AG04450 (cell line): ENCODE measurements at regions of chr2 and their contacts with region 1.

Region 1: GRCh38 chr2:74573747-74574562 is 19.4 kb downstream of the DOK1 start:
- DNase-seq: peak; percentile 68
- H3K4me3 ChIP-seq: peak overlapping the region; percentile 14; the same call in 1 of the 2 replicates
- H3K27ac ChIP-seq: peak overlapping the region; percentile 49
- H3K27me3 ChIP-seq: no peaks in the 10 kb centered on the region
- CTCF ChIP-seq: no peak

Region 2: DNA sequence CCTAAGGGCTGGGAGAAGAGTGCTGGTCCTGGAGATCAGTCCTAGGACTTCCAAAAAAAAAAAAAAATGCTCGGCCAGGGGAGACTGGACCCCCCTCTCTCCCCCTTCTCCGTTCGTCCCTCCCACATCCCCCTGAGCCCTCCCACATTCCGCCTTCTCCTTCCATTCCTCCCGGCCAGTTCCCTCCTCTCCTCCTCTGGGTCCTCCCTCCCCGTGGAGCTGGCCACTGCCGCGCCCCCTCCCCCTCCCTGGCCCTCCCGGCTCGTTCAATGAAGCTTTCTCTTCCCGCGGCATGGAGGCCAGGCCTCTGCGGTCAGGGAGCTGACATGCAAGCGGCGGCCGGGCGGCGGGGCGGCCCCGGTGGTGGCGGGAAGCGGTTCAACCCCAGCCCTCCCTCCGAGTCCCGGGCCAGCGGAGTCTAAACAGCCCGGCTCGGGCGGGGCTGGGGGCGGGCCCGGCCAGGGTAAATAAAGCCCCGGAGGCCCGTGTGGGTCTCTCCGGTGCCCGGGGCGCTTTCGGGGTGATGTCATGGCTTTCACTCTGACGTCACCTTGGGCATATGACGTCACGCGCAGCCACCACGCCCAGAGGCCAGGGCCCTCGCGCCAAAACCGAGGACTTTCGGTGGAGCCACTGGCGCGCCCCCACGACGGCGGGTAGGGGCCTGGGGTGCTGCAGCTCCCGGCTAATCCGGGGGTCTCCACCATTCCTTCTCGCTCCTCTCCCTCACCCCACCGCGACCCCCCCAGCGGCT is 19.9 kb before region 1 on chr2 and contains the start of gene LOXL3:
- CTCF ChIA-PET with region 1: interaction called, 7 read pairs
- POLR2A ChIA-PET with region 1: interaction called, 15 read pairs
- DNase-seq: peak; percentile 83
- H3K4me3 ChIP-seq: peak within 1 kb of the TSS; percentile 97
- H3K27ac ChIP-seq: peak within 1 kb of the TSS; percentile 91
- H3K27me3 ChIP-seq: no peaks in the 10 kb centered on the region
- CTCF ChIP-seq: no peak
- polyA plus RNA-seq, gene LOXL3: 41.1 and 46.2 TPM in 2 replicates